Activated CD4-positive, alpha-beta T cell treated with anti-CD3 and anti-CD28 coated beads for 36 hours (primary cell): ENCODE measurements at regions of chr11 and their contacts with region 1.

Region 1: GRCh38 chr11:65040847-65041621 is at the start of gene SAC3D1:
- DNase-seq: peak; percentile 96
- ATAC-seq: peak; percentile 95
- H3K4me3 Mint-ChIP-seq: peak within 1 kb of the TSS; percentile 86
- H3K27ac Mint-ChIP-seq: peak within 1 kb of the TSS; percentile 95
- H3K4me1 Mint-ChIP-seq: peaks cover 17% of the 10 kb centered on the region
- H3K27me3 Mint-ChIP-seq: no peaks in the 10 kb centered on the region
- total RNA-seq, gene SAC3D1: 10.5 to 12.1 TPM

Region 2: GRCh38 chr11:64317957-64318693 is 722.9 kb before region 1 on chr11 and contains the start of gene PRDX5:
- CTCF ChIA-PET with region 1: no interaction called
- POLR2A ChIA-PET with region 1: no interaction called
- intact Hi-C with region 1: loop called in 1 of 2 experiments (anchors 2 kb)
- DNase-seq: peak; percentile 97
- ATAC-seq: peak; percentile 84
- H3K4me3 Mint-ChIP-seq: peak within 1 kb of the TSS; percentile 97
- H3K27ac Mint-ChIP-seq: peak within 1 kb of the TSS; percentile 99
- H3K4me1 Mint-ChIP-seq: peaks cover 26% of the 10 kb centered on the region
- H3K27me3 Mint-ChIP-seq: no peaks in the 10 kb centered on the region
- total RNA-seq, gene PRDX5: 110 to 142 TPM

Region 3: GRCh38 chr11:64826578-64827450 is 214.2 kb before region 1 on chr11:
- CTCF ChIA-PET with region 1: no interaction called
- POLR2A ChIA-PET with region 1: no interaction called
- intact Hi-C with region 1: no loop called
- DNase-seq: no peak
- ATAC-seq: no peak
- H3K4me3 Mint-ChIP-seq: no peak overlapping the region
- H3K27ac Mint-ChIP-seq: no peak overlapping the region
- H3K4me1 Mint-ChIP-seq: no peaks in the 10 kb centered on the region
- H3K27me3 Mint-ChIP-seq: no peaks in the 10 kb centered on the region

Region 4: DNA sequence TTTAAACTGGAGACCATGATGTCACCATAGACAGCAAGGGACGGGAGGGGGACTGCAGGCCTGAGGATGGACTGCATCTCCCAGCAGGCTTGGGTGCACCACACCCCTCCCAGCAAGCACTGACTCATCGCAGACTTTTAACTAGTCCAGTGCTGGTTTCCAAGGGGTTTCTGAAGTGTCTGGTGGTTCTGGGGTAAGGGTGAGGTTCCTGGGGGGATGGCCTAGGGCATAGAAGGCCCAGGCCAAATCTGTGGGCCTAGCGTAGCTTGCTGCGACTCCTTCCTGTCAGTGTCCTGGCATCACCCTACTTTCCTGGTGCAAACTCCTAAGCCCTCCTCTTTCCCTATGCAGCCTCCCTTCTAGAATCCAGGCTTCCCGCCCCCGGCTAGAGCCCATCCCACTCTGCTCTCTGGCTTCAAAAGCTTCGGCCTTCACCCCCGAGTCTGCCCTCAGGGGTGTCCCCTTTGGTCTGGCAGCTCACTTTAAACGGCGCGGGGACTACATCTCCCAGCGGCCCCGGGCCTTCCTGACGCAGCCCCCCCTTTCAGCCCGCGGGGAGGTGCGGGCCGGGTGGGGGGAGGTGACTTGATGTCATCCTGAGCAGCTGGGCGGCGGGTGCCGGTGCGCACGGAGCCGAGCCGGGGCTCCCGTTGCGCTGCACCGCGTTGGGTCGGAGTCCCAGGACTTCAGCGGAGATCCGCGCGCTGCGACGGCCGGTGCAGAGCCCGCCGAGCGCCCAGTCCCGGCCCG is 116.8 kb before region 1 on chr11 and contains the start of gene PPP2R5B:
- CTCF ChIA-PET with region 1: no interaction called
- POLR2A ChIA-PET with region 1: no interaction called
- intact Hi-C with region 1: loop called in 1 of 2 experiments (anchors 1 kb)
- DNase-seq: peak; percentile 95
- ATAC-seq: peak; percentile 95
- H3K4me3 Mint-ChIP-seq: peak within 1 kb of the TSS; percentile 81
- H3K27ac Mint-ChIP-seq: peak within 1 kb of the TSS; percentile 98
- H3K4me1 Mint-ChIP-seq: peaks cover 9% of the 10 kb centered on the region
- H3K27me3 Mint-ChIP-seq: no peaks in the 10 kb centered on the region
- total RNA-seq, gene PPP2R5B: 13.2 to 13.5 TPM

Region 5: GRCh38 chr11:65027213-65028067 is 13.6 kb before region 1 on chr11 and contains the start of gene SNX15:
- CTCF ChIA-PET with region 1: interaction called, 6 read pairs
- POLR2A ChIA-PET with region 1: no interaction called
- intact Hi-C with region 1: loop called (anchors 1 kb)
- DNase-seq: peak; percentile 94
- ATAC-seq: peak; percentile 91
- H3K4me3 Mint-ChIP-seq: peak within 1 kb of the TSS; percentile 73
- H3K27ac Mint-ChIP-seq: peak within 1 kb of the TSS; percentile 86
- H3K4me1 Mint-ChIP-seq: peaks cover 21% of the 10 kb centered on the region
- H3K27me3 Mint-ChIP-seq: no peaks in the 10 kb centered on the region
- total RNA-seq, gene SNX15: 12.1 to 14.2 TPM

Region 6: DNA sequence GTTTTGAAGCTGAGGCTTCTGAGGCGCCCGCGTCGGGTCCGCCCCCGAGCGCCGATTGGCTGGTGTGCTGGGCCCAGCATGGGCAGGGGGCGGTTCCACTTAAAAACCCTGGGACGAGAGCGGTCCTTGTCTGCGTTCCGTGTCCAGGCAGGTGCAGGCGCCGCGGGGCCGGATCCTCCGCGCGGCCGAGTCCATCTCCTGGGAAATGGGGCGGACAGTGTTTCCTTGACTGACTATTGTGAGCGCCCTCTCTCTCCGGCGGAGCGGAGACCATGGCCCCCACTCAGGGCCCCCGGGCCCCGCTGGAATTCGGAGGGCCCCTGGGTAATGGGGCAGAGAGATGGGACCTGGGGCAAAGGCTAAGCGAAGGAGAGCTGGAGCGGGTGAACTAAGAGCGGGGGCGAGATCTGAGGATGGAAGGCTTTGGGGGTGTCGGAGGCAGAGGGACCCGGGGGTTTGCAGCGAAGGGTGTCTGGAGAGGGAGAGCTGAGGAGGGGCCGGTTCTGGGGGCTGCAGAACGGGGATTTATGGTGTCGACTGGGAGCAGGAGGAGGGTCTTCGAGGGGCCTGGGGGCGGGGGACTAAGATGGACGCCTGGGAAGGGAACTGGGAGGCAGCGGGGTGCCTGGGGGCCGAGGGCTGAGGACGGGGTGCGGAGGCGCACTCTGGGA is 70.8 kb after region 1 on chr11 and contains the start of gene TM7SF2:
- CTCF ChIA-PET with region 1: no interaction called
- POLR2A ChIA-PET with region 1: no interaction called
- intact Hi-C with region 1: loop called (anchors 1 to 2 kb)
- DNase-seq: peak; percentile 98
- ATAC-seq: peak; percentile 78
- H3K4me3 Mint-ChIP-seq: peak within 1 kb of the TSS; percentile 83
- H3K27ac Mint-ChIP-seq: peak within 1 kb of the TSS; percentile 74
- H3K4me1 Mint-ChIP-seq: peaks cover 50% of the 10 kb centered on the region
- H3K27me3 Mint-ChIP-seq: no peaks in the 10 kb centered on the region
- total RNA-seq, gene TM7SF2: 17.4 to 18.1 TPM

Region 7: DNA sequence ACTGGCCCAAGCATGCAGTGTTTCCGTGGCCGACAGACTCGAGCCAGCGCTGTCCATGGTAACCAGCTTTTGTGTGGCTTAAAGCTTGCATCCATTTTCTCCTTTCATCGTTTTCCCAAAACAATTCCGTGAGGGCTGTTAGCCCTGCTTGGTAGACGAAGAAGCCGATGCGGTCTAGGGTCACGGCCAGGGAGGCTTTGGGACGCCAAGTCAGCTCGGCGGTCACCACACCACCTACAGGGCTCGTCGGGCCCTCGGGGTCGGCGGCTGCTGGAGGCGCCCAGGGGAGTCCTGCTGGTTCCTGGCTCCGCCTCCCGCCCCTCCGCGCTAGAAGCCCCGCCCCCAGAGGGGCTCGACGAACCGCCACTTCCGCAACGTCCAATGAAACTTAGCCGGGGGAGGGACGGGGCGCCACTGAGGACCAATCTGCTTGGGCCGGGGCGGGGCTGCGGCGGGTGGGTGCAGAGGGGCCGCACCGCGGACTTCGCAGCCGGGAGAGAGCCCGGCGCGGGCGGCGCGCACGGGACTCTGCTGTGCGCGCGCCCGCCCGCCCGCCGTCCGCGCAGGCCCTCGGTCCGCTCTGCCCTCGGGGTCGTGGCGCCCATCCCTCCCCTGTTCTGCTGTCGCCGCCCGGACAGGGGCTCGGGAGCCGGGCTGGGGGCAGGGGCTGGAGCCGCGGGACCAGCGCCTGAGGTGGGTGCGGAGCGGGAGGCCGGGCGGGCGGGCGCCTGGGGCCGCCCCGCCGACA is 313.4 kb after region 1 on chr11 and contains the start of gene TIGD3:
- CTCF ChIA-PET with region 1: no interaction called
- POLR2A ChIA-PET with region 1: no interaction called
- intact Hi-C with region 1: loop called in 1 of 2 experiments (anchors 1 kb)
- DNase-seq: peak; percentile 98
- ATAC-seq: peak; percentile 99
- H3K4me3 Mint-ChIP-seq: peak within 1 kb of the TSS; percentile 73
- H3K27ac Mint-ChIP-seq: peak within 1 kb of the TSS; percentile 42
- H3K4me1 Mint-ChIP-seq: peaks cover 13% of the 10 kb centered on the region
- H3K27me3 Mint-ChIP-seq: no peaks in the 10 kb centered on the region
- total RNA-seq, gene TIGD3: 0.58 to 1.1 TPM